ENCODE measurements at regions of chr12 and their contacts with region 1.

Region 1: DNA sequence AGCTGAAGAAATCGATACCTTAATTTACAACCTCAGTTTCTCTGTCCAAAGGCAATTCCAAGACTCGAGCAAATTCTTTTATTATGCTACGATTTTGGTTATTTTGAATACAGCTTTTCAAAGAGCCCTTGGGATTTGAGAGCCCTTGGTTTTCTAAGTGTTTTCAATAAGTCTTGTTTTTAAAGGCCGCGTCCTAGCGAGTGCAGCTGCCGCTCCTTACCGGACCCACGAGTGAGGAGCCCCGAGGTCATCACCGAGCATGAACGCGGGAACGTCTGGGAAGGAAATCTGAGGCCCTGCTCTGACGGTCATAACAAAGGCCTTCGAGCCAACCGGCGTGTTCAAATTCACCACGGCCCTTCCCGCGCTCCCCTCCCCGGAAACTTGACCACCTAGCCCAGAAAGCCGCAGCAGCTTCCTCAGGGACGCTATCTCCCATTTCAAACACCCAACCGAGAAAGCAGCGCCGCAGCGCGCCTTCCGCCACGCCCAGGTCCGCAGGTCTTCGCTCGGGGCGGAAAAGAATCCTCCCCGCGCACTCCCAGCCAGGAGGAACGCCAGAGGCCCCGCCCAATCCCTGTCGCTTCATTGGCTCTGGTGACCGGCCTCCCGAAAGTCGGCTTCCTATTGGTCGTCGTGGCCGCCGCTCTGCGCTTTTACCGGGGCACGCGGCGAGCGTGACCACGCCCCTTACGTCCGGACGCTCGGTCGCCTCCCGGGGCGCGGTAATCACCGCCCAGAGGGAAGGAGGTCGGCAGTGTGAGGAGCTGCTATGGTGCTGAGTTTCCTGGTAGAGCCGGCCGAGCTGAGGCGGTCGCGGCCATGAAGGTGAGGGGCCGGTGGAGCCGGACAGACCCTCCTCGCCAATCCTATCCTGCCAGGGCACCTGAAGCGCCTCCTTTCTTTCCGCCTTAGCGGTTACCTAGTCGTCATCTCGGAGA is at the start of gene RNF34:
- DNase-seq: peak; percentile 93 to 99
- ATAC-seq: peak; percentile 96 to 97
- H3K4me3 ChIP-seq: peak within 1 kb of the TSS; percentile 84
- H3K27ac ChIP-seq: peak within 1 kb of the TSS; percentile 94 to 96
- H3K4me1 ChIP-seq: peaks cover 19% of the 10 kb centered on the region
- CTCF ChIP-seq: no peak
- EP300 ChIP-seq: no peak
- POLR2A ChIP-seq: peak; percentile 98
- RAD21 ChIP-seq: no peak
- polyA plus RNA-seq, gene RNF34: 59.4 and 94.4 TPM in 2 replicates

Region 2: GRCh38 chr12:121287267-121287954 is 112.2 kb before region 1 on chr12:
- CTCF ChIA-PET with region 1: no interaction called
- POLR2A ChIA-PET with region 1: no interaction called
- DNase-seq: no peak
- ATAC-seq: no peak; a peak in 1 of 6 replicates
- H3K4me3 ChIP-seq: no peak overlapping the region
- H3K27ac ChIP-seq: no peak overlapping the region
- H3K4me1 ChIP-seq: no peaks in the 10 kb centered on the region
- CTCF ChIP-seq: no peak
- EP300 ChIP-seq: no peak
- POLR2A ChIP-seq: no peak
- RAD21 ChIP-seq: no peak

Region 3: GRCh38 chr12:121351820-121352681 is 47.6 kb before region 1 on chr12 and contains the start of gene ANAPC5:
- CTCF ChIA-PET with region 1: interaction called, 5 read pairs
- POLR2A ChIA-PET with region 1: interaction called, 32 read pairs
- DNase-seq: peak; percentile 99 to 100
- ATAC-seq: peak; percentile 99
- H3K4me3 ChIP-seq: peak within 1 kb of the TSS; percentile 67
- H3K27ac ChIP-seq: peak within 1 kb of the TSS; percentile 81 to 91
- H3K4me1 ChIP-seq: peaks cover 11% of the 10 kb centered on the region; the same call in 2 of the 3 replicates
- CTCF ChIP-seq: no peak
- EP300 ChIP-seq: no peak
- POLR2A ChIP-seq: peak; percentile 86
- RAD21 ChIP-seq: no peak
- polyA plus RNA-seq, gene ANAPC5: 213 and 225 TPM in 2 replicates

Region 4: DNA sequence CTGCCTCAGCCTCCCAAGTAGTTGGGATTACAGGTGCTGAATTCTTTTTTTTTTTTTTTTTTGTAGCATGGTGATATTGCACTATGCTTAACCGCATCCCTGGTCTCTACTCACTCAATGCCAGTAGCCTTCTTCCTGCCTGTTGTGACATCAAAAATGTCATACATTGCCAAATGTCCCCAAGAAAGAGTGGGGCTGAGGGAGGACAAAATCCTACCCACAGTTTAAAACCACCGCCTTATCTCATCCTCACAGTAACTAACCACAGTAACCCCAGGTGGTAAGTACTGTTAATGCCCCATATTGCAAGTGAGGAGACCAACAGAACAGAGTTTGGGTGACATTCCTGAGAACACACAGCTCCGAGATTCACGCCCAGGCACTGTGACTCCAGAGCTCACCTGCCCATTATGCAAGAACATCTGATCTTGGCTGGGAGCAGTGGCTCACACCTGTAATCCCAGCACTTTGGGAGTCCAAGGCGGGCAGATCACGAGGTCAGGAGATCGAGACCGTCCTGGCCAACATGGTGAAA is 250.2 kb after region 1 on chr12:
- CTCF ChIA-PET with region 1: no interaction called
- POLR2A ChIA-PET with region 1: no interaction called
- DNase-seq: no peak
- ATAC-seq: no peak
- H3K4me3 ChIP-seq: no peak overlapping the region
- H3K27ac ChIP-seq: no peak overlapping the region
- H3K4me1 ChIP-seq: no peaks in the 10 kb centered on the region
- CTCF ChIP-seq: no peak
- EP300 ChIP-seq: no peak
- POLR2A ChIP-seq: no peak
- RAD21 ChIP-seq: no peak